T-cell (primary cell): ENCODE measurements at regions of chr17 and their contacts with region 1.

Region 1: GRCh38 chr17:7523033-7523432 is 25.8 kb upstream of the TNFSF12 start:
- DNase-seq: peak in 30 of 35 experiments; percentile 14 to 75 (median 40)
- ATAC-seq: peak in 3 of 4 experiments; percentile 52 to 78 (median 53)
- H3K4me3 ChIP-seq: no peak overlapping the region
- H3K4me3 Mint-ChIP-seq: no peak overlapping the region
- H3K27ac ChIP-seq: no peak overlapping the region
- H3K27ac Mint-ChIP-seq: peak overlapping the region in 1 of 2 donors; percentile 69
- H3K4me1 ChIP-seq: peaks cover 0 to 6% of the 10 kb centered on the region in 2 experiments
- H3K4me1 Mint-ChIP-seq: peaks cover 3 to 6% (median 4%) of the 10 kb centered on the region in 3 donors
- H3K27me3 ChIP-seq: no peaks in the 10 kb centered on the region
- H3K27me3 Mint-ChIP-seq: no peaks in the 10 kb centered on the region

Region 2: GRCh38 chr17:6651357-6651918 is 871.6 kb before region 1 on chr17 and contains the starts of genes C17orf100 and MED31:
- CTCF ChIA-PET with region 1: no interaction called
- POLR2A ChIA-PET with region 1: no interaction called
- DNase-seq: peak; percentile 85 to 96 (median 91)
- ATAC-seq: peak; percentile 90 to 96 (median 96)
- H3K4me3 ChIP-seq: peak within 1 kb of the TSS; percentile 69 to 79
- H3K4me3 Mint-ChIP-seq: peak within 1 kb of the TSS; percentile 97 to 99 (median 98)
- H3K27ac ChIP-seq: peak within 1 kb of the TSS; percentile 97
- H3K27ac Mint-ChIP-seq: peak within 1 kb of the TSS; percentile 99
- H3K4me1 ChIP-seq: peaks cover 20 to 36% of the 10 kb centered on the region in 2 experiments
- H3K4me1 Mint-ChIP-seq: peaks cover 68 to 80% (median 75%) of the 10 kb centered on the region in 3 donors
- H3K27me3 ChIP-seq: peaks cover 0 to 13% of the 10 kb centered on the region in 2 experiments
- H3K27me3 Mint-ChIP-seq: no peaks in the 10 kb centered on the region
- total RNA-seq, gene C17orf100: 1.1 to 3.5 (median 2.8) TPM
- total RNA-seq, gene MED31: 18.9 to 26.3 (median 22.1) TPM

Region 3: DNA sequence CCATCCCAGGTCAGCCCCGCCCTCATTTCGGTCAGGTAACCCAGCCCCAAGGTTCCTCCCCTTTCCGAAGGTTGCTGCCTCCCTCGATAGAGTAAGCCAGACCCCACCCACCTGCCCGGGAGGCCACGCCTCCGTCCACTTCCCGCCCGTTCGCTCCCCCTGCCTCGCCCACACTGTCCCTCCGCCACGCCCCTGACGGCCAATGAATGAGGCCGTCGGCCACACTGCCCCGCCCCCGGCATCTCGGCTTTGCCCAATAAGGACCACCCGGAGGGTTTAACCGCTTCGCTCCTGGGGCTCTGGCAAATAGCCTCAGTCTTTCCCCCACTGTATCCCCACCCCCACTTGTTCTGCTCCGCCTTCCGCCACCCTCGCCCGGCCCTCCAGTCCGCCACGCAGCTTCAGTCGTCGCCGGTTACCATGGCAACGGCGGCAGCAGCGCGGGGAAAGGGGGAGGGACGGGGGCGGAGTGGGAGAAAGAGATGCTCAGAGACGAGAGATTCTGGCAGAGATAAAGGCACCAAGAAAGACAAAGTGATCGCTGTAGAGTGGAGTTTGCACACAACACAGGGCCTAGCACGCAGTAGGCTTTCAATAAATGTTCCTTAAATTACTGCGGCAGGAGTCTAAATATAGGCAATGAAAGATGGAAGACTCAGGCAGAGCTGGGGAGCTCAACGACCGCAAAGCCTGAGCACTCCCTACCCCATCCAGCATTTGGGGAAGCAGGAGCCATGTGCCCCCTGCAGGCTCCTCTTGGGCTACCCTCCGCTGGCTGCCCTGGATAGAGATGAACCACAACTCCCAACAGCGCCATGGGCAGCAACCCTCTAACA is 308.5 kb before region 1 on chr17:
- CTCF ChIA-PET with region 1: no interaction called
- POLR2A ChIA-PET with region 1: no interaction called
- DNase-seq: peak; percentile 89 to 100 (median 96)
- ATAC-seq: peak; percentile 78 to 81 (median 80)
- H3K4me3 ChIP-seq: peak overlapping the region; percentile 61 to 69
- H3K4me3 Mint-ChIP-seq: peak overlapping the region; percentile 86 to 92 (median 88)
- H3K27ac ChIP-seq: peak overlapping the region; percentile 96
- H3K27ac Mint-ChIP-seq: peak overlapping the region; percentile 95 to 99
- H3K4me1 ChIP-seq: peaks cover 36 to 61% of the 10 kb centered on the region in 2 experiments
- H3K4me1 Mint-ChIP-seq: peaks cover 62 to 67% (median 64%) of the 10 kb centered on the region in 3 donors
- H3K27me3 ChIP-seq: no peaks in the 10 kb centered on the region
- H3K27me3 Mint-ChIP-seq: peaks cover 0 to 5% of the 10 kb centered on the region in 2 donors

Region 4: DNA sequence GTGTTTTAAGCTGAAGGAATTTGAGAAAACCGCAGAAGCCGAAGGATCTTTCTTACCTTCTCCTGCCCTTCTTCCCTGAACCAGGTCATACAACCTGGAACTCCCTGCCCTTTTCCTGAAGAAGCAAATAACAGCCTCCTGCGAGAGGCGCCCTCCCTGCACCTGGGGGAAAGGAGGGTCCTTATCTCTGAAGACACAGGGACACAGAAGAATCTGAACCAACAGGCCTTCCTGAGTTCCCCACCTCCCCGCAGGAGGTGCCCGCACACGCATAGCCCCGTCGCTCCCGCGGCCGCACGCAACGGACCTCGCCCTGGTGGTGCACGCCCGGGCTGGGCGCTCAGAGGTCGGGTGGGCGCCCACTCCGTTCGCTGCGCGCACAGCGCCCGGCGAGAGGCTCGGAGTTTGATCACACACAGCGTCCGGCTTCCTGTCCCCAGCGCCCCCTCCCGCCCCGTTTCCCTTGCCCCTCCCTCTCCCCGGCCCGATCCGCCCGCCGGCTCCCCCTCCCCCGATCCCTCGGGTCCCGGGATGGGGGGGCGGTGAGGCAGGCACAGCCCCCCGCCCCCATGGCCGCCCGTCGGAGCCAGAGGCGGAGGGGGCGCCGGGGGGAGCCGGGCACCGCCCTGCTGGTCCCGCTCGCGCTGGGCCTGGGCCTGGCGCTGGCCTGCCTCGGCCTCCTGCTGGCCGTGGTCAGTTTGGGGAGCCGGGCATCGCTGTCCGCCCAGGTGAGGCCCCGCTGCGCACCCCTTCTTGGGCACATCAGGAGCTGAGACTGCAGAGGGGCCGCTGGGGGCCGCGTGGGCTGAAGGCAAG is 25.8 kb after region 1 on chr17 and contains the start of gene TNFSF12:
- CTCF ChIA-PET with region 1: interaction called in 1 of 2 experiments, 10 read pairs
- POLR2A ChIA-PET with region 1: interaction called in 1 of 2 experiments, 5 read pairs
- DNase-seq: peak in 27 of 35 experiments; percentile 7 to 68 (median 36)
- ATAC-seq: peak; percentile 20 to 72 (median 66)
- H3K4me3 ChIP-seq: peak within 1 kb of the TSS; percentile 81 to 84
- H3K4me3 Mint-ChIP-seq: peak within 1 kb of the TSS; percentile 84 to 90 (median 89)
- H3K27ac ChIP-seq: peak within 1 kb of the TSS; percentile 71
- H3K27ac Mint-ChIP-seq: peak within 1 kb of the TSS; percentile 96 to 97
- H3K4me1 ChIP-seq: peaks cover 29 to 62% of the 10 kb centered on the region in 2 experiments
- H3K4me1 Mint-ChIP-seq: peaks cover 48 to 61% (median 56%) of the 10 kb centered on the region in 3 donors
- H3K27me3 ChIP-seq: no peaks in the 10 kb centered on the region
- H3K27me3 Mint-ChIP-seq: no peaks in the 10 kb centered on the region
- total RNA-seq, gene TNFSF12: 38.3 to 72.8 (median 61.4) TPM

Region 5: DNA sequence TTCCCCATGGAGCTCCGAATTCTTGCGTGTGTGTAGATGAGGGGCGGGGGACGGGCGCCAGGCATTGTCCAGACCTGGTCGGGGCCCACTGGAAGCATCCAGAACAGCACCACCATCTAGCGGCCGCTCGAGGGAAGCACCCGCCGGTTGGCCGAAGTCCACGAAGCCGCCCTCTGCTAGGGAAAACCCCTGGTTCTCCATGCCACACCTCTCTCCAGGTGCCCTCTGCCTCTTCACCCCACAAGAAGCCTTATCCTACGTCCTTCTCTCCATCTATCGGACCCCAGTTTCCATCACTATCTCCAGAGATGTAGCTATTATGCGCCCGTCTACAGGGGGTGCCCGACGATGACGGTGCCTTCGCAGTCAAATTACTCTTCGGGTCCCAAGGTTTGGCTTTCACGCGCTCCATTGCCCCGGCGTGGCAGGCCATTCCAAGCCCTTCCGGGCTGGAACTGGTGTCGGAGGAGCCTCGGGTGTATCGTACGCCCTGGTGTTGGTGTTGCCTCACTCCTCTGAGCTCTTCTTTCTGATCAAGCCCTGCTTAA is 38.1 kb after region 1 on chr17:
- CTCF ChIA-PET with region 1: interaction called, 10 to 18 read pairs
- POLR2A ChIA-PET with region 1: no interaction called
- DNase-seq: peak; percentile 48 to 87 (median 71)
- ATAC-seq: peak; percentile 62 to 72 (median 69)
- H3K4me3 ChIP-seq: peak overlapping the region; percentile 73 to 83
- H3K4me3 Mint-ChIP-seq: peak overlapping the region; percentile 87 to 92 (median 92)
- H3K27ac ChIP-seq: peak overlapping the region; percentile 91
- H3K27ac Mint-ChIP-seq: peak overlapping the region; percentile 85 to 95
- H3K4me1 ChIP-seq: peaks cover 12 to 51% of the 10 kb centered on the region in 2 experiments
- H3K4me1 Mint-ChIP-seq: peaks cover 33 to 53% (median 52%) of the 10 kb centered on the region in 3 donors
- H3K27me3 ChIP-seq: no peaks in the 10 kb centered on the region
- H3K27me3 Mint-ChIP-seq: no peaks in the 10 kb centered on the region